ENCODE measurements at regions of chr12 and their contacts with region 1.

Region 1: DNA sequence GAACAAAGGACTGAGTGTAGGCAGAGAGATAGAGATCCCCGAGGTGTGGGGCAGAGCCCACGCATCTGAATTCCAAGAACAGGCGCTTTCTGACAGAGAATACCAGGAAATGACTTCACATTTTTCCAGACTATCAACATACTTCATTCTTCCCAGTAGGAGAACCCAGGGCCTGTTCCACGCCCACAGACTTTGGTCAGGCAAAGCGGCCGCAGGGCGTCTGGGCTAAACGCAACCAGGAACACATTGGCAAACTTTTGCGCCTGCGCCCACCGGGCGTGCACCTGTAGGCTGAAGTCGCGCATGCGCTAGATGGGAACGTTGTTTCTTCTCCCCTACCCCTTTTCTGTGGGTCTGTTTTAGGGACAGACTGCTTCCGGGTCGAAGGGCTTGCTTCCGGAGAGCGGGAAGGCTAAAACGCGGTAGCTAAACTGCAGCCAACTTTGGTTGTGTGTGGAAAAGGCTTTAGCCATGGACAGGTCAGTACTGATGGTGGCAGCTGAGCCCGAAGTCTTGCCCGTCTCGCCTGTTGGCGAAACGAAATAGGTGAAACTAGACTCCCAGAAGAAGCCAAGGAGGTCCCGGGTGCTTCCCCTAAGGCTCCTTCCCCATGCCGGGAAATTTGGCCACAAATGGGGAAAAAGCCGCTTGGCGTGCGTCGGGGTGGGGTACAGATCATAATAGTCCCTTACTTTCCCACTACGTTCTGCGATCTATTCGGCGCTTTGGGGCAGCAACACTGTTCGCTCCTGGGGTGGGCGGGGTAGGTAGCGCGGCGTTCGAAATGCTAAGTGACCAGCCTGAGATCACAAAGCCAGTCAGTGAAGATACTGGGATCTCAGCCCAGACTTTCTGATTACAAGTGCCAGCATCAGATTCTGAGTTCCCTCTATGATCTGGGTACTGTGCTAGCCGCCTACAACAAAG is at the start of gene NUP107:
- ATAC-seq: peak; percentile 88 to 99 (median 96)
- H3K4me3 ChIP-seq: peak within 1 kb of the TSS; percentile 69 to 100 (median 93)
- H3K27ac ChIP-seq: peak within 1 kb of the TSS; percentile 54 to 85
- H3K4me1 ChIP-seq: peaks cover 4 to 9% of the 10 kb centered on the region in 2 donors
- total RNA-seq, gene NUP107: 32.7 to 102 (median 35.7) TPM

Region 2: GRCh38 chr12:67981287-67982162 is 705.3 kb before region 1 on chr12:
- in situ Hi-C with region 1: no loop called
- ATAC-seq: peak in 7 of 8 experiments; percentile 66 to 97 (median 87)
- H3K4me3 ChIP-seq: no peak overlapping the region
- H3K27ac ChIP-seq: no peak overlapping the region
- H3K4me1 ChIP-seq: peaks cover 0 to 3% of the 10 kb centered on the region in 2 donors

Region 3: DNA sequence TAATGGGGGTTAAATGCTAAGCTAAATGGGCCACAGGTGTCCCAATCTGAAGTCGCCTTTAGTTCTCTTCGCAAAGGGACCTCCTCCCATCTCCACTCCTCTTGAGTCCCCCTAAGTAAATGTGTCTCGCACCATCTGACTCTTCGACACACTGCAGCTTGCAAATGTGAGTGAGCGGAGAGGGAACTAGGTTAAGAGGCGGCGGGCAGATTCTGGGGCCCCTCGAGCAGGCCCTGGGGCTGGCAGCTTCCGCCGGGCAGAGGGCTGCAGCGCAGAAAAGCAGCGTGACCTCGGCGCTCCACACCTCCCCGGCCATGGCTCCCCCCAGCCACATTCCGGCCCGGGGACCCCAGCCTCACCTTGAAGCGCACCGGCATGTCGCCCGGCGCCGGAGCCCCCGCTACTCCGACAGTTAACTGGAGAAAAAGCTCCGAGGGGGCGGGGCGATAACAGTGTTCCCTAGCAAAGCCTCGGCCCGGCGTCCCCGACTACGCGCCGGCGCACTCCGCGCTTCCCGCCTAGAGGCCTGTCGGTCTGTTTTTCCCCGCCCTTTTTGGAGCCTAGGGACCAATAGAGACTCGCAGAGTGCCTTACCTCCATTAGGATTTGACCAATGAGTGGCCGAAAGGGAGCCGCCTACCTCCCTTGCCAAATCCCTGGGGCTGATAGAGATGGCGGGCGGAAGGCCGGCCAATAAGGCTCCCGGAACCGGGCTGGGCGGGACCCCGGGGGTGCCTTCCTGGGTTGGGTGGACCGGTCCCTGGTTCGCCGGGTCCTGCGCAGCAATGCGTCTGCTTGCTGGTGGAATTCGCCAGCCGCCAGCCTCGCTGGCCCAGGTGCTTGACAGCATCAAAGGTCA is 354.8 kb before region 1 on chr12 and contains the start of gene MDM1:
- in situ Hi-C with region 1: loop called in 1 of 9 experiments (anchors 25 kb)
- ATAC-seq: peak; percentile 97 to 99 (median 98)
- H3K4me3 ChIP-seq: peak within 1 kb of the TSS; percentile 73 to 89 (median 74)
- H3K27ac ChIP-seq: peak within 1 kb of the TSS in 1 of 2 donors; percentile 22
- H3K4me1 ChIP-seq: peaks cover 0 to 11% of the 10 kb centered on the region in 2 donors
- total RNA-seq, gene MDM1: 7.9 to 22.9 (median 12.1) TPM

Region 4: DNA sequence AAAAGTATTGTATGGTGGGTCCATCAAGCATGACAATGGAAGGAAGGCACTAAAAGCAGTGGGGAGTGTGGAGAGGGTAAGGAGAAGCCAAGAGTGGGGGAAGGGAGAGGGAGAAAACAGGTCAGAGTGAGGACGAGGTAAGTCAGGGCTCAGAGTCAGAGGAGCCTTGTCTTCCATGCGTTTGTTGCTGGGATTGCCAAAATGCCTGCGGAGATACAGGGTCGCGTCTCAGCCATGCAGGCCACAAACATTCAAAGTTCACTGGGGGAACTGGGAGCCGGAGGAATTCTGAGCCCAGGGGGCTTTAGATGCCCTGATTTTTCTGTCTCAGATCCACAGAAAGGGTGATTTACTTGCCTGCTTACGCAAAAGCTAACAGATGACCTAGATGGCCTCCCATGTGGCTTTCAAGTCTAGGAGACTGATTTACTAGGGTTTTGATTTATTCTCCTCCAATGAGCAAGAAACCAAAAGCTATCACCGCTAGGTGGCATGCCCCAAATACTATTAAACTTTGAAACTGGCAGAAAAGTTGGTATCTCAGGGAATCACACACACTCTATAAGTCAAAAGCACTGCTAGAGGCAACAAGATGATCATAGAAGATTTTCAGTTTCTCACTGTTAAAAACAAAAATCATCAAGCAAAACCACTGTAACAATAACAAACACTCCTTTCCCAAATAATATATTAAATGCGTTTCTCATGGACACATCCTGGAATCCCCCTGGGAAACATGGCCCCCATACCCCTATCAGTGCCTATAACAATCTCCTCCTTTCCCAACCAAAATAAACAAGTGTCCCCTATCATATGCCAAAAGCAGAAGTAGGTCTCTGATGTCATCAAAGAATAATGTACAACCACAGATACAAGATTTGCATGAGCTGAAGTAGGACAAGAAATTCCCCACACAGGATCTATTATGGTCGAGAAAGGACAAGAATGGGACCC is 328.0 kb before region 1 on chr12:
- in situ Hi-C with region 1: loop called in 1 of 9 experiments (anchors 25 kb)
- ATAC-seq: peak in 7 of 8 experiments; percentile 15 to 90 (median 44)
- H3K4me3 ChIP-seq: no peak overlapping the region
- H3K27ac ChIP-seq: no peak overlapping the region
- H3K4me1 ChIP-seq: peaks cover 16 to 22% of the 10 kb centered on the region in 2 donors

Region 5: GRCh38 chr12:68587448-68587873 is 99.4 kb before region 1 on chr12:
- in situ Hi-C with region 1: loop called in 1 of 9 experiments (anchors 25 kb)
- ATAC-seq: no peak
- H3K4me3 ChIP-seq: no peak overlapping the region
- H3K27ac ChIP-seq: no peak overlapping the region
- H3K4me1 ChIP-seq: no peaks in the 10 kb centered on the region

Region 6: DNA sequence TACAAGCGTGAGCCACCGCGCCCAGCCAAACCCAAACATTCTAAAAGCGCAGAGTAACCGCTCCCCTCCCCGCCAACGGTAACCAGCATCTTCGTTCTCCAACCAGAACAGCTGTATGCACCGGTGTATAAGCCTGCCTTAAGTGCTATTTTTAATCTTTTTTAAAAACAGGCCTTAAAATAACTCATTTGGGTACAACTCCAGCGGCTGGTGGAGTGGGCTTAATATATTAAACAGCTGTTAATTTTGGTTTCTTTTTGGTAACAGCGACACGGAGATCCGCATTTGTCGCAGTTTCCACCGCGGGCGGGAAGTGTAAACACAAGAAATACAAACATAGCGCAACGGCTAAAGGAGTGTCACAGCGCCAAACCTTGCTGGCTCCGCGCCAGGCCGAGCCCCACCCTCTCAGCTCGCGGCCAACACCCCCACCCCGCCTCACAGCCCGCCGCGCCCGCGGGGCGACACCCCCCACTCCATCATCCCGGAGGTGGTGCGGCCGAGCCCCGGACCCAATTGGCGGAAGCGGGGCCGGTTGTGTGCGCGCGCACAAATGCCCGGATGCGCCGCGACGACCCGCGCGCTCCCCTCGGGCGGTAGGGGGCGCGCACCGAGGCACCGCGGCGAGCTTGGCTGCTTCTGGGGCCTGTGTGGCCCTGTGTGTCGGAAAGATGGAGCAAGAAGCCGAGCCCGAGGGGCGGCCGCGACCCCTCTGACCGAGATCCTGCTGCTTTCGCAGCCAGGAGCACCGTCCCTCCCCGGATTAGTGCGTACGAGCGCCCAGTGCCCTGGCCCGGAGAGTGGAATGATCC is 120.9 kb after region 1 on chr12 and contains the start of gene MDM2:
- in situ Hi-C with region 1: no loop called
- ATAC-seq: peak; percentile 44 to 93 (median 90)
- H3K4me3 ChIP-seq: peak within 1 kb of the TSS; percentile 59 to 89 (median 82)
- H3K27ac ChIP-seq: peak within 1 kb of the TSS; percentile 94 to 99
- H3K4me1 ChIP-seq: no peaks in the 10 kb centered on the region
- total RNA-seq, gene MDM2: 33.6 to 384 (median 99.5) TPM